ENCODE measurements at regions of chr11 and their contacts with region 1.

Region 1: DNA sequence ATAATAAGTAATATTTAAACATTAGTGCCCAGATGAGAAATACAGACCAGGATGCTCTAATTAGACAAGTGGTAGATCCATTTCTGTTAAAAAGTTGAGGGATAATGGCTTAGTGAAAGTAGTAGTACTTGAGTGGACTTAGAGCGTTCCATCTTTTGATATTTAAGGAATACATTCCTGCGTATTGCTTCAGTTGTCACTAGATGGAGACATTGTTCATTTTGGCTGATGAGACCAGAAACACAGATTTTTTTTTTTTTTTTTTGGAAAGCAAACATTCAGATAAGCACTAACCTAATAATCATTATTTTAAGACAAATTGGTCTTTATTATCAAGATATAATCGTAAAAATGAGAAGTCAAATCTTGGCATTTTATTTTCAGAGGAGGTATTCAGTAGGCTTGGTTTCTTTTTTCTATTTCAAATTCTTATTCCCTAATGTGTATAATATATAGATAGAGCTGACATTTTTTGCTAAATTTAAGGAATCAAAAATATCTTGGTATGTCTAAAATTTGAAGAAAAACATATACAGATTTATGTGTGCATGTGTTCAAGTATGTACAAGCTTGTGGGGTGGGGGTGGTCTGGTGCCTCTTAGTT is 92.9 kb downstream of the DYNC2H1 start:
- DNase-seq: peak; percentile 28
- H3K4me3 ChIP-seq: no peak overlapping the region; a peak in 1 of 4 replicates
- H3K27ac ChIP-seq: peak overlapping the region in 1 of 2 experiments; percentile 47; a peak in 2 of 4 replicates
- H3K4me1 ChIP-seq: no peaks in the 10 kb centered on the region
- H3K27me3 ChIP-seq: no peaks in the 10 kb centered on the region
- CTCF ChIP-seq: peak; percentile 86
- EP300 ChIP-seq: 0 out of 4 replicates have a peak, but pooled peaks of 1 of the 2 experiments have one; percentile 14
- RAD21 ChIP-seq: peak; percentile 81

Region 2: GRCh38 chr11:103601225-103601846 is 399.2 kb after region 1 on chr11:
- CTCF ChIA-PET with region 1: interaction called, 12 read pairs
- POLR2A ChIA-PET with region 1: interaction called, 4 read pairs
- DNase-seq: peak; percentile 47
- H3K4me3 ChIP-seq: no peak overlapping the region
- H3K27ac ChIP-seq: peak overlapping the region in 1 of 2 experiments; percentile 60; a peak in 2 of 4 replicates
- H3K4me1 ChIP-seq: no peaks in the 10 kb centered on the region
- H3K27me3 ChIP-seq: no peaks in the 10 kb centered on the region
- CTCF ChIP-seq: peak; percentile 97
- EP300 ChIP-seq: 0 out of 4 replicates have a peak, but pooled peaks of 1 of the 2 experiments have one; percentile 13
- RAD21 ChIP-seq: peak; percentile 98